Activated CD4-positive, alpha-beta T cell treated with anti-CD3 and anti-CD28 coated beads for 36 hours (primary cell): ENCODE measurements at regions of chr4 and their contacts with region 1.

Region 1: GRCh38 chr4:102826890-102827673 is at the start of gene UBE2D3:
- DNase-seq: peak; percentile 97
- ATAC-seq: peak; percentile 46
- H3K4me3 Mint-ChIP-seq: no peak within 1 kb of the TSS
- H3K27ac Mint-ChIP-seq: no peak within 1 kb of the TSS
- H3K4me1 Mint-ChIP-seq: peaks cover 23% of the 10 kb centered on the region
- H3K27me3 Mint-ChIP-seq: no peaks in the 10 kb centered on the region
- total RNA-seq, gene UBE2D3: 472 to 686 TPM

Region 2: DNA sequence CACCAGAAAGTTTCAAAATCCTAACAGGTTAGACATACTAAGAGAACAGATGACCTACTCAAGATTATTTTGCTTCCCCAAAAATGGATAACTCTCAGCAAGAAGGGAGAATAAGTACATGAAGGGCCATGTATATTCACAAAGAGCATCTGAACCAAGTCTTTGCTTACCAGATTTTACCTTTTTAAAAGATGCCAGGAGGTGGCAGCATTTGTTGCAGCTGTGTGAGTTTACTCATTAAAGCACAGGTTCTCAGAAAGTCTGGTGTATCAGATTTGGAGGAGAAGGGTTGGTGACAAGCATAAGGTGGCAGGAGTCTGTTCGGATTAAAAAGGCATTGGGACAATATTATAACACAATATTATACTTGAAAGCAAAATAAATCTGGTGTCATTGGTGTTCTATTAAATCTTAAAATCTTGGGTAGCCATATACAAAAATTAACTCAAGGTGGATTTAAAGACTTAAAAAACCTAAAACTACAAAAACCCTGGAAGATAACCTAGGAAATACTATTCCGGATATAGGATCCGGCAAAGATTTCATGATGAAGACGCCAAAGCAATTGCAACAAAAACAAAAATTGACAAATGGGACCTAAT is 377.2 kb before region 1 on chr4:
- CTCF ChIA-PET with region 1: interaction called, 3 read pairs
- POLR2A ChIA-PET with region 1: no interaction called
- intact Hi-C with region 1: loop called in 1 of 2 experiments (anchors 5 kb)
- DNase-seq: peak; percentile 69
- ATAC-seq: peak; percentile 86
- H3K4me3 Mint-ChIP-seq: no peak overlapping the region
- H3K27ac Mint-ChIP-seq: no peak overlapping the region
- H3K4me1 Mint-ChIP-seq: peaks cover 54% of the 10 kb centered on the region
- H3K27me3 Mint-ChIP-seq: no peaks in the 10 kb centered on the region

Region 3: DNA sequence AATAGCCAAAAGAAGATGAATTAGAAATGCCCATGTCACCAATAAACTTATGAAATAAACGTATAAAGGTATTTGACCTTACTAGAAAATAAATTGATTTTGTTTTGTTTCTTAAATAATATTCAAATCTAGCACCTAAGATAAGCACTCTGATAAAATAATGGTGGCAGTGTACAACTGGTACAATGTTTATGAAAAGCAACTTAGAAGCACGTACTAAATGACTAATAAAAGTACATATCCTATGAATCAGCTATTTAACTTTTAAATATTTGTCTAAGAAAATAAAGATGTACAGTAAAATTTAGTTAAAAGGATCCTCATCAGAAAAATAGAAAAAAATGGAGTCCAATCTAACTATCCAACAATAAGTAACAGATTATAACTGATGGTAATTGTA is 73.0 kb before region 1 on chr4:
- CTCF ChIA-PET with region 1: no interaction called
- POLR2A ChIA-PET with region 1: interaction called, 12 read pairs
- intact Hi-C with region 1: no loop called
- DNase-seq: no peak
- ATAC-seq: no peak
- H3K4me3 Mint-ChIP-seq: no peak overlapping the region
- H3K27ac Mint-ChIP-seq: no peak overlapping the region
- H3K4me1 Mint-ChIP-seq: peaks cover 9% of the 10 kb centered on the region
- H3K27me3 Mint-ChIP-seq: no peaks in the 10 kb centered on the region

Region 4: GRCh38 chr4:102815981-102816380 is 11.1 kb before region 1 on chr4:
- CTCF ChIA-PET with region 1: interaction called, 11 read pairs
- POLR2A ChIA-PET with region 1: interaction called, 58 read pairs
- intact Hi-C with region 1: loop called (anchors 1 kb)
- DNase-seq: no peak
- ATAC-seq: peak; percentile 21
- H3K4me3 Mint-ChIP-seq: no peak overlapping the region
- H3K27ac Mint-ChIP-seq: peak overlapping the region; percentile 83
- H3K4me1 Mint-ChIP-seq: peaks cover 89% of the 10 kb centered on the region
- H3K27me3 Mint-ChIP-seq: no peaks in the 10 kb centered on the region

Region 5: DNA sequence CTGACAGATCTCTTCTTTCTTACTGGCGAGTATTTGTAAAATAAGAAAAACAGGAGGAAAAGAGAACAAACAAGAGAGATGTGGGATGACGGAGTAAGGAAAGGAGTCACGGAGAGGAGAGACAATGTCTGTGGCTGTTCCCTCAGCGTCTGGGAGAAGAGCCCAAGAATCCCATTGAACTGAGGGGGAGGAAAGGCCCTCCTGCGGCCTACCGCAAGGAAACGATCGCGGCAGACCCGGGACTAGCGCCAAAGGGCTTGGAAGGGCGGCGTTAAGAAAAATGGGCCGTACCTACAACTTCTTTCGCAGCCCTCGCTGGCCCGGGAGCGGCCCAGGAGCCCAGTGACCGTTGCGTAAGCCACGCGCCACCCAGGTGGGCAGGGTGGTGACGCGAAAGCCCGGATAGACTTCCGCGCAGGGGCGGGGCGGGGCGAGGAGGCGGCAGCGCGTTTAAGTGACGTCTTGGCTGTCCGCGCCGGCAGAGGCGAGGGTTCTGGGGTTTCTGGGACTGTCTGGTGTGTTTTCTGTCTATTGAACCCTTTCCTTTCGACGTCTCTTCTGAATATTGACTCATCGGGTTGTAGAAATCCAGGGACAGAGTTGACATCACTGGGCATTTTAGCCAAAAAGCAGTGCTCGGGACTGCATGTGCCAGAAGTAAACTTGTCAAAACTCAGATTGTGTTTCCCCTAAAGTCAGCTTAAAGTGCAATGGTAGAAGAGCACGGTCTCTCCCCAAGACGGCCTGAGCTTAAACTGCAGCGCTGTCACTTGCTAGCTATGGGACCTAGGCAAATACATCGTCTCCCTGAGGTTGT is 192.4 kb after region 1 on chr4 and contains the start of gene SLC9B1:
- CTCF ChIA-PET with region 1: interaction called, 3 read pairs
- POLR2A ChIA-PET with region 1: interaction called, 4 read pairs
- intact Hi-C with region 1: loop called (anchors 1 kb)
- DNase-seq: peak; percentile 97
- ATAC-seq: peak; percentile 98
- H3K4me3 Mint-ChIP-seq: peak within 1 kb of the TSS; percentile 86
- H3K27ac Mint-ChIP-seq: peak within 1 kb of the TSS; percentile 97
- H3K4me1 Mint-ChIP-seq: peaks cover 19% of the 10 kb centered on the region
- H3K27me3 Mint-ChIP-seq: no peaks in the 10 kb centered on the region
- total RNA-seq, gene SLC9B1: 1.8 to 3.7 TPM